Esophagus squamous epithelium (tissue), 5 donors: ENCODE measurements at regions of chr1 and their contacts with region 1.

Region 1: DNA sequence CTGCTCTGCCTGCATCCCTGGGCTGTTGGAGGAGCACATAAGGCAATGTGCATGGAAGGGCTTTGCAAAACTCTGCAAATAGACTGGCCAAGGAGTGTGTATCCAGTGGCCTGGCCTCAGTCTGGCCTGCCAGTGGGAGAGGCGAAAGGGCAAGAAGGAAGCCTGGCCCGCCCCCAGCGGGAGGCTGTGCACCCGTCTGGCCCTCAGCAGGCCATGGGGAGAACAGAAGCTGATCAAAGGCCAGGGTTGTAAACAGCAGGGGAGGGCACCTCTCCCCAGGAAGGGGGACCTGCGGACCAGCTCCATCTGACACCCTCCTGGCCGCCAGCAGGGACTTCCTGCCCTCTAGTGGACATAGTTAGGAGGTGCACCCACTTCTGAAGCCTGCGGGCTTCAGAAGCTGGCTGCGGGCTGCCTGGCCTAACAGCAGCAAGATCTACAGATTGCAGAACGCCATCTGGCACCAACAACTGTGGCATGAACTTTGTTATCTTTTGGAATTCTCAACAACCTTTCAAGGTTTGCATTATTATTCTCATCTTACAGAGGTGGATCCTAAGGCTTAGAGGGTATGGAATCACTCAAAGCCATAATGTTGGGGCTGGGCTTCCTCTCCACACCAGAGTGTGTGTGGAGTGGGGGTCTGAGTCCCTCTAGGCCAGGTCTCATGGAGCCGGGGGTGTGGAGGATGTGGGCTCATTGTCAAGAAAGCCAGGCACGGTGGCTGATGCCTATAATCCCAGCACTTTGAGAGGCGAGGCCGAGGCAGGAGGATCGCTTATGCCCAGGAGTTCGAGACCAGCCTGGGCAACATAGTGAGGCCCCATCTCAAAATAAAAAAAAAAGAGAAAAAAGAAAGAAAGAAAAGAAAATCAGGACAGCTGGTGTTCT is 18.9 kb upstream of the CDK18 start:
- DNase-seq: no peak
- H3K4me3 ChIP-seq: no peak overlapping the region
- H3K27ac ChIP-seq: no peak overlapping the region
- H3K4me1 ChIP-seq: peaks cover 8 to 27% (median 14%) of the 10 kb centered on the region in 3 donors
- H3K27me3 ChIP-seq: peaks cover 0 to 98% (median 4%) of the 10 kb centered on the region in 4 donors
- CTCF ChIP-seq: peak; percentile 83 to 97 (median 96)
- POLR2A ChIP-seq: no peak

Region 2: DNA sequence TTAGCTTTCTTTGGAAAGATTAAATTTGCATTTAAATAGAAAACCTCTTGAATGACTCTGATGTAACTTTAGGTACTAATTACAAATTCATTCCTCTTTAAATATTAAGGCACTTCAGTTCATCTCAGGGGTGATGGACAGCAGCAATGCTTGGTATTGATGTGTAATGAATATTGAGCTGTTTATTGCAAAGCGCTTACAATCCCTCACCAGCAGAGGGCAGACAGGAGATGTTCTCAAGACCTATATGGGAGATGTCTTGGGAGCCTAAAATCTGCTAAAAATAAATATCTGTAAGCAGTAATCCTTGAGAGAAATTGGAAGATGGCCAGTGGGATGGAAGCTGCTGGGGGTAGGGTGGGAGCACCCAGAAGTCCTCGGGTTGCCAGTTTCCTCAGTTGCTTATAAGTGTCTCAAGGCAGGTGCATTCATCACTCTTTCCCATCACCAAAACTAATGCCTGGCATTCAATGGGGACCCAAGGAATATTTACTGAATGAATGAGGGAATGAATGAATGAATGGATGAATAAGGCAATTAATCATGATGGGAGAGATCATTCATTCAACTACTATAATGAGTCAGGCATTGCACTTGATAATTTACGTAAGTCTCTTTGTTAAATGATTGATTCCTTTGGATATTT is 131.2 kb before region 1 on chr1:
- intact Hi-C with region 1: loop called (anchors 10 kb)
- DNase-seq: no peak
- H3K4me3 ChIP-seq: no peak overlapping the region
- H3K27ac ChIP-seq: peak overlapping the region in 3 of 4 donors; percentile 1 to 63 (median 26)
- H3K4me1 ChIP-seq: peaks cover 5 to 68% (median 13%) of the 10 kb centered on the region in 3 donors
- H3K27me3 ChIP-seq: peaks cover 0 to 29% (median 0%) of the 10 kb centered on the region in 4 donors
- CTCF ChIP-seq: peak; percentile 76 to 87 (median 81)
- POLR2A ChIP-seq: no peak

Region 3: DNA sequence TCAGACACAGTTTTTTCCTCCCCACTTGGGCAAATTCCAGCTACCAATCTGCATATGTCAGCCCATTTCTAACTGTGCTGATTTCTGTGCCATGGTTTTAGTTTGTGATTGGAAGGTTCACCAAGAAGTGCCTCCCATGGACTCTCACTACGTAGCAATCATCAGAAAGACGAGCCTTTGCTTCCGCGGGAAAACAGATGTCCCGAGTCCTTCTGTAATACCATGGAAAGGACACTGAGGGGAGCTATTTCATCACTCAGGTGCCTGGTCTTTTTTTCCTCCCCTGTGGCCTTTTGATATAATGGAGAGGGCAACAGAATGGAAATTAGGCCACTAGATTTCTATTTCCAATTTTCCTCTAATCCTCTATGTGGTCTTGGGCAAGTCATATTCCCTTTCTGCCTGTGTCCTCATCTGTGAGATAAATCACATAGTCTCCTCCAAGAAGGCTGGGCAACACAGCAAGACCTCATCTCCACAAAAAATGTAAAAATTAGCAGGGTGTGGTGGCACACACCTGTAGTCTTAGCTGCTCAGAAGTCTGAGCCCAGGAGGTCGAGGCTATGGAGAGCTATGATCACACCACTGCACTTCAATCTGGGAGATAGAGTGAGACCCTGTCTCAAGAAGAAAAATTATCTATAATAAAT is 88.5 kb before region 1 on chr1:
- intact Hi-C with region 1: loop called (anchors 10 kb)
- DNase-seq: no peak
- H3K4me3 ChIP-seq: no peak overlapping the region
- H3K27ac ChIP-seq: no peak overlapping the region
- H3K4me1 ChIP-seq: no peaks in the 10 kb centered on the region
- H3K27me3 ChIP-seq: peaks cover 0 to 16% (median 0%) of the 10 kb centered on the region in 4 donors
- CTCF ChIP-seq: peak; percentile 37 to 80 (median 64)
- POLR2A ChIP-seq: no peak

Region 4: GRCh38 chr1:205416322-205416721 is 69.3 kb before region 1 on chr1:
- intact Hi-C with region 1: no loop called
- DNase-seq: no peak
- H3K4me3 ChIP-seq: no peak overlapping the region
- H3K27ac ChIP-seq: no peak overlapping the region
- H3K4me1 ChIP-seq: peaks cover 0 to 6% (median 0%) of the 10 kb centered on the region in 3 donors
- H3K27me3 ChIP-seq: peaks cover 0 to 18% (median 0%) of the 10 kb centered on the region in 4 donors
- CTCF ChIP-seq: no peak
- POLR2A ChIP-seq: no peak

Region 5: GRCh38 chr1:205528887-205529825 is 43.6 kb after region 1 on chr1:
- intact Hi-C with region 1: loop called (anchors 5 kb)
- DNase-seq: peak; percentile 23
- H3K4me3 ChIP-seq: peak overlapping the region in 3 of 4 donors; percentile 38 to 62 (median 40)
- H3K27ac ChIP-seq: peak overlapping the region in 1 of 4 donors; percentile 46
- H3K4me1 ChIP-seq: peaks cover 8 to 15% (median 9%) of the 10 kb centered on the region in 3 donors
- H3K27me3 ChIP-seq: peaks cover 0 to 5% (median 0%) of the 10 kb centered on the region in 4 donors
- CTCF ChIP-seq: peak; percentile 76 to 98 (median 92)
- POLR2A ChIP-seq: no peak